Posterior vena cava (tissue), 2 donors: ENCODE measurements at regions of chr2 and their contacts with region 1.

Region 1: DNA sequence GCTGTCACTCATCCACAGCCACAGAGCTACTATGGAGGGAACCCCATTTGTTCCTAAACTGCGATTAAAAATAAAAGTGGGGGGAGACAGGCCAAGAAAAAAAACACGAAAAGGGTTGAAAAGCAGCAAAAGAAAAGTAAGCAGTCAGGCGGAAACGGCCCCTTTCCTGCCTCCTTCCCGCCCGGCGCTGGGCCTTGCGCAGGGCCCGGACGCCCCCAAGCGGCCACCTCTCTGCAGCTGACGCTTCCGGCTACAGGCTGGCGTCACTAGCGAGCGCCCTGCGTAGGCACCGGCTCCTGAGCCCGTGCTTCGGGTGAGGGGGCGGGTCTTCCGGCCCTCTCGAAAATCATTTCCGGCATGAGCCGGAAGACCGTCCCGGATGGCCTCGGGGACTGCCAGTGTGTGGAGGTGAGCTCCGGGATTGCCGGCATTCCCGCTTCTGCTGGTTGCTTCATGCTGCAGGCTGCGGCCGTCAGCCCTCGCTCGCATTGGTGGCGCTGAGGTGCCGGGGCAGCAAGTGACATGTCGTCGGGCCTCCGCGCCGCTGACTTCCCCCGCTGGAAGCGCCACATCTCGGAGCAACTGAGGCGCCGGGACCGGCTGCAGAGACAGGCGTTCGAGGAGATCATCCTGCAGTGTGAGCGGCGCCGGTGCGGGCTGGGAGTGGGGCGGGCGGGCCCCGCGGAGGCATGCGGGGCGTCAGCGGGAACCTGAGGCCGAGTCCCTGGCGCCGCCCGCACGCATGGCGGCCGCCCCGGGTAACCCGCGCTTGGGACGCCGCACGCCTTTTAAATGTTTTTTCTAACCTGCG is at the start of gene ATG16L1:
- DNase-seq: peak; percentile 99
- total RNA-seq, gene ATG16L1: 19.9 to 22.8 TPM

Region 2: DNA sequence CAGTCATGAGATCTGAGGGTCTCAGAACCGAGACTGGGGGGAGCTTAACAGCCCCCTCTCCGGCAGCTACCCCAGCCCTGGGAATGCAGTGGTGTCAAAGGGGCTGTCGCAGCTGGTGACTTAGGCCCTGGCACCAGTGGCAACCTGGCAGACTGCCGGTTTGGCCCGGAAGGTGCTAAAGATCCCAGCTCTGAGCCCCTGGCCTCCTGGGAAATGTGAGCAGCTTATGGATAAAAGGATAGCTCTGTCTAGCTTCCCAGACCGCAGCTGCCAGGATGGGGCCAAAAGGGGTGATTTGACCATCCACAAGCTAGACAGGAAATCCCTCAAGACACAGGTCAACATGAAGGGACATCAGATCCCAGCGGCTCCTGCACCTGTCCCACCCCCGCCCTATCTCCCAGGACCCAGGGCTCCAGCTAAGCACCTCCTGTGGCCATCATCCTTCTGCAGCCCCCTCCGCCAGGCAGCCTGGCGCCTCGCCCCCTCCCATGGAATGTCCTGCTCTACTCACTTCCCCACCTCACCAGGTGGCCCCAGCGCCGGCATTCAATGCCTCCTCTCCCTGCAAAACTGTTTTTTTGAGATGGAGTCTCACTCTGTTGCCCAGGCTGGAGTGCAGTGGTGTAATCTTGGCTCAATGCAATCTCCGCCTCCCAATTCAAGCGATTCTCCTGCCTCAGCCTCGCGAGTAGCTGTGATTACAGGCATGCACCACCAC is 651.3 kb before region 1 on chr2:
- intact Hi-C with region 1: loop called in 1 of 2 experiments (anchors 10 kb)
- DNase-seq: no peak

Region 3: GRCh38 chr2:232854082-232854481 is 397.4 kb before region 1 on chr2:
- intact Hi-C with region 1: loop called (anchors 5 kb)
- DNase-seq: no peak

Region 4: GRCh38 chr2:233202531-233202944 is 49.0 kb before region 1 on chr2:
- intact Hi-C with region 1: no loop called
- DNase-seq: no peak

Region 5: DNA sequence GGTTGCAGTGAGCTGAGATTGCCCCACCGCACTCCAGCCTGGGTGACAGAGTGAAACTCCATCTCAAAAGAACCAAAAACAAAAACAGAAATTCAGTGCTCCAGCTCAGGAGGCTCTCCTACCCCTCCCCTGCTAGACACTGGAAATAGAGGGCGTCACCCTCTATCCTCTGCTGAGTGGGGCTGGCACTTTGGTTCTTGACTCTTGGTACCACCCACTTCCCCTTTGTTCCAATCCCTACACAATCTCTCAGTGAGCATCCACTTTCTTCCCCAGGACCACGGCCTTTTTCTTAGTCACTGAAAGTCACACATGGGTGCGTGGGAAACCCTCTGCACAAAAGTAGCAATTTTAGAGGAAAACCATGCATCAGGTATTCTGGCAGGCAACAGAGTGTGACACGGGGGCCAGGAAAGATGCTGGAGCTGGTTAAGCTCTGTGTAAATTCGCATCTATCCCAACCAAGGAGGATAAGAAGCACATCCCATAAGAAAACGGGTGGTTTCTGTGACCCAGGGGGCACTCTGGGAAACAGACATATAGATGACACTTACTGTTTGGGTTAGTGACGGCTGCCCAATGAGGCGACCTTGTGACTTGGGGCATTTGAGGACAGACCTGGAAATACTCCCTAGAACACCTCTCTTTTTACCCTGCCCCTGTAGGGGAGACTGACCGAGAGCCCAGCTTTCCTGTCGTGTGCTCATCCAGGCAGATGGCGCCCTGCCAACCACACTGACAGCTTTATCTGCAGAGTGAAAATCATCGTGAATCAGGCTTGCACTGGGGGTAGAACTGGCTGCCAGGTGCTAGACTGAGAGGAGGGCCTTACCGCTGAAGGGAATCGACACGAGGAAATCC is 595.1 kb after region 1 on chr2:
- intact Hi-C with region 1: no loop called
- DNase-seq: peak; percentile 38